ENCODE measurements at regions of chr1 and their contacts with region 1.

Region 1: GRCh38 chr1:228109073-228109961 is at the start of gene MRPL55:
- DNase-seq: peak; percentile 100
- total RNA-seq, gene MRPL55: 39.7 TPM

Region 2: GRCh38 chr1:228082135-228082891 is 27.0 kb before region 1 on chr1 and contains the start of gene ARF1:
- intact Hi-C with region 1: loop called (anchors 2 kb)
- DNase-seq: peak; percentile 97
- total RNA-seq, gene ARF1: 332 TPM

Measured in cardiac septum (tissue), 1 donor.